Right ventricle myocardium inferior (tissue), 1 donor: ENCODE measurements at regions of chr17 and their contacts with region 1.

Region 1: GRCh38 chr17:1147661-1148060 is 32.1 kb downstream of the ABR start:
- DNase-seq: no peak
- ATAC-seq: peak; percentile 36

Region 2: GRCh38 chr17:1122533-1123392 is 24.9 kb before region 1 on chr17:
- intact Hi-C with region 1: loop called (anchors 1 kb)
- DNase-seq: peak; percentile 93
- ATAC-seq: peak; percentile 78